ENCODE measurements at regions of chr2 and their contacts with region 1.

Region 1: DNA sequence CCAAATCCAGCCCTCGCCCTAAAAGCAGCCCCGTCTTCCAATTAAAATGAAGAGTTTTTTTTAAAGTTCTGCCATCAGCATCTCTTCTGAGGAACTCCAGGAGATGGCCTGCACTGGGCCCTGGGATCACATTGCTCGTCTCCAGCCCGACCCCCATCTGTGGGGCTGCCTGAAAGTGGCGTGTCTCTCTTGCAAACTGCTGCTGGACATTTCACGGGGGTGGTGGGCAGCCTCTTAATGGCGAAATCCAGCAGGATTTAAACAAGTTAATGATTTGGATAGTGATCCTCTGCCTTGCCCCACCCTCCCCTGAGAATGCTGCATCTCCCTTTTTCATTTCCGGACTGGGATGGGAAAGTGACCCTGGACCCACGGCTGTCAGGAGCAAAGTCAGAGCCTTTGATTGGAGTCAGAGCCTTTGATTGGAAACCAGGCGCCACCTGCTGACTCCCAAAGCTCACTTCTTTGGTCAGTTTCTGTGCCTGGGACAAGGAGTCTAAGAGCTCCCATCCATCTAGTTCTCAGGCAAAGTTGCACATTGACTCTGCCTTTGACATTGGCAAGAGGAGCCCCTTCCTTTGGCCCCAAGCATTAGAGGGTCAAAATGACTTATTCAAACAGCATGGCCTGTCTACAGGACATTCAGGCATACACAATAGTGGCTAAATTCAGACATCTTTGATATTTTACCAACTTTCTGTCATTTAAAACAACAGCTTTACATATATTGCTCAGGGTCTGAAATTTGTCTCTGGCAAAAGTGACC is 155.2 kb downstream of the SH3BP4 start:
- DNase-seq: peak; percentile 52
- H3K4me3 ChIP-seq: no peak overlapping the region
- H3K27ac ChIP-seq: no peak overlapping the region
- H3K4me1 ChIP-seq: no peaks in the 10 kb centered on the region
- H3K27me3 ChIP-seq: peaks cover 4% of the 10 kb centered on the region
- CTCF ChIP-seq: peak; percentile 58 to 90

Region 2: DNA sequence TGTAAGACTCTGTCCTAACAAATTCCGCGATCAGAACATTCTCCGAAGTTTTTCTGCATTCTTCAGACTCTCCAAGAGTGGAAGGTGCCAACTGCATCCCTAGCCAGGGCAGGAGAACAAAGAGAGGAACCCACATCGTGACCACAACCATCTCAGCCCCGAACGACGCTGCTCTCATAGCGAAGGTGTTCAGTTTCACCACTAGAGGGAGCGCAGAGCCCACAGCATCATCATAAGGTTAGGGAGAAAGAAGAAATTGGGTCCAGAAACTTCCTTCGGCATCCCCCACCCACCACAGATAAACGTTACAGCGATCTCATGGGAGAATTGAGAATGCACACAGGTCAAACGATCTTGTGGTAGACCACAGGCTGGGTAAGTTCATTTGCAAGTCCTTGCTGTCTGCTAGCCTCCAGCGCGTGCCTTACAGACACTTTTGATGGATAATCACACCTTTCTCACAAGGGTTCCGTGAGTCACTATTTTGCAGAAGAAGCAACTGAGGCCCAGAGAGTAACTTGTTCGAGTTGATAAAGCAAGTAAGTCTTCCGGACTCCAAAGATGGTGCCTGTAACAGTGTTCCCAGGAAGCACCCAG is 556.4 kb before region 1 on chr2:
- CTCF ChIA-PET with region 1: interaction called, 3 read pairs
- dilution Hi-C with region 1: no loop called
- in situ Hi-C with region 1: loop called (anchors 5 kb)
- intact Hi-C with region 1: loop called (anchors 1 kb)
- DNase-seq: peak; percentile 62
- H3K4me3 ChIP-seq: no peak overlapping the region
- H3K27ac ChIP-seq: no peak overlapping the region
- H3K4me1 ChIP-seq: peaks cover 5% of the 10 kb centered on the region
- H3K27me3 ChIP-seq: no peaks in the 10 kb centered on the region
- CTCF ChIP-seq: peak; percentile 90 to 96

Region 3: DNA sequence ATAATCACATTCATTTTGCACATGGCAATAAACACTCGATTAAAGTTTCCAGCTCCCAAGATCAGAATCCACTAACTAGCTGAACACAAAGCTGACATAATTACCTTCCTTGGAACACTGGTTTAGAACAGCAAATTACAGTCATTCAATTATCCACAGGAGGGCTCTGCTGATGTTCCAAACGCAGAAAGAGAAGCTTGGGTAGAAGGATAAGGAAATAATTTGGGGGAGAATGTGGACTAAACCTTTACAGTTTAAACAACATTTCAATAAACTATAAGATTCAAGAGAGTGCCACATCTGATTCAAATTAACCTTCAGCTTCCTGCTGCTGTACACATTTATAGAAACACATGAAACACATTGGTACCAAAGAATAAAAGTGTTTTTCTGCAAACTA is 542.4 kb before region 1 on chr2:
- CTCF ChIA-PET with region 1: interaction called, 4 read pairs
- dilution Hi-C with region 1: no loop called
- in situ Hi-C with region 1: no loop called
- intact Hi-C with region 1: loop called (anchors 1 kb)
- DNase-seq: no peak
- H3K4me3 ChIP-seq: no peak overlapping the region
- H3K27ac ChIP-seq: no peak overlapping the region
- H3K4me1 ChIP-seq: no peaks in the 10 kb centered on the region
- H3K27me3 ChIP-seq: no peaks in the 10 kb centered on the region
- CTCF ChIP-seq: peak in 1 of 2 donors; percentile 34

Region 4: GRCh38 chr2:234751275-234751973 is 355.6 kb before region 1 on chr2:
- CTCF ChIA-PET with region 1: no interaction called
- dilution Hi-C with region 1: no loop called
- in situ Hi-C with region 1: no loop called
- intact Hi-C with region 1: loop called (anchors 1 kb)
- DNase-seq: no peak
- H3K4me3 ChIP-seq: no peak overlapping the region
- H3K27ac ChIP-seq: no peak overlapping the region
- H3K4me1 ChIP-seq: no peaks in the 10 kb centered on the region
- H3K27me3 ChIP-seq: no peaks in the 10 kb centered on the region
- CTCF ChIP-seq: peak in 1 of 2 donors; percentile 32

Region 5: DNA sequence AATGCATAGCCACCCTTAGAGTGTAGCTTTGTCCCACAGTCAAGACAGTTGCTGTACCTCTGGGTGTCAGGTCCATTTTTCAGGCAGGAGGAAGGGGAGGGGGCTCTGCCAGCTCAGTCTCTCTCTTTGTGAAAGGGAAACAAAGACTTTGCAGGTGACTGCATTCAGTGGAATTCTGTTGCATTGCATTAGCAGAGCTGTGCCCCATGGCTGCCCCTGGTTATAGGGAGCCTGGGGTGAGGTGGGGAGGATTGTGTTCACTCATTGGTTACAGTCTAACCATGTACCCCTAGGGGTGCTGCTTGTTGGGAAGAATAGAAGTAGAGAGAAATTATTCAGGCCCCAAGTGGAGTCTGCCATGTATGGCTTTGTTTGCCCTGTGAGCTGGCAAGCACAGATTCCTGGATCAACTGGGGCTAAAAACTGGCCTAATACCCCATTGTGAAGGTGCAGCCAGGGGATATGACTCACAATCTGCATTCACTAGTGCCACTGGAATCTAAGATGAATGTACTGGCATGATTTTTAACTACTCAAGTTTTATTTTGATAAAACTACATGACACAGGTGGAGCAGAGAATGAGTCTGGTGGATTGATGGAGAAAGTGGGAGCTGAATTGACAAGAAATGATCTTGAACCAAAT is 36.9 kb before region 1 on chr2:
- CTCF ChIA-PET with region 1: no interaction called
- dilution Hi-C with region 1: no loop called
- in situ Hi-C with region 1: no loop called
- intact Hi-C with region 1: no loop called
- DNase-seq: no peak
- H3K4me3 ChIP-seq: no peak overlapping the region
- H3K27ac ChIP-seq: no peak overlapping the region
- H3K4me1 ChIP-seq: peaks cover 11% of the 10 kb centered on the region
- H3K27me3 ChIP-seq: no peaks in the 10 kb centered on the region
- CTCF ChIP-seq: no peak